ENCODE measurements at regions of chr5 and their contacts with region 1.

Region 1: DNA sequence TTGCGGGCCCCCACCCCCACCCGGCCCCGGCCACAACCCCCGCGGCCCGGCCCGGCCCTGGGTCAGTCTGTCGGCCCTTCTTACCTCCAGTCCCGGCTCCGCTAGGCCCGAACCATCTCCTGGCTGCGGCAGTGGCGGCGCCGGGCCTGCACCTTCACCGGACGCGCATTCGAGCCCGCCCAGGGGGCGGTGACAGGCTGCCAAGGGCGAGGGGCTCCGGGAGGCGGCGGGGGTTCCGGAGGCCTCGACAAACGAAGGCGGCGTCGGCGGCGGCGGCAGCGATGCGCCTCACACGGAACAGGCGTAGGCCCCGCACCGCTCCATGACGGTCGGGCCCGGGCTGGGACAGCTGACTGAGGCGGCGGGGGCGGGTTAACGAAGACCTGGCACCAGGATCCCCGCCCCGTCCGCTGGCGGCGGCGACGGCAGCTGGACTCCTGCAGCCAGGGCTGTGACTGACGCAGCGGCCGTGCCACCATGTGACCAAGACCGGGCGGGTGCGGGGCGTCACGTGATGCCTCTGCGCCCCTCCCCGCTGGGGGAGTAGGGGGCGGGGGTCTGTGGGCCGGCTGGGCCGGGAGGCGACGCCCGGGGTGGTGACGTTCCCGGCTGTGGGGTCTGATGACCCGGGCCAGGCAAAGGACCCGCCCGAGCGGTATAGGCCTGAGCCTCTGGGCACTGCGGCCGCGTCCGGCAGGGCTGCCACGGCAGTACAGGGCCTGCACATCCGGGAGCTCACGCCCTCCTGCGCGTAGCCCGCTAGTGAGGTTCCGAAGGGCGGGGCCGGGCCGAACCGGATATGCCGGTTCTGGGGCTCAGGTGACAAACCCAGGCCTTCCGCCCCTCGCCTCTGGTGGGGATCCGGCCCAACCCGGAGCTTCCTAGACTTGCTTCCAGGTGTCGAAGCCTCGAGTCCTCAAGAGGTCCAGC is at the start of gene AFF4:
- DNase-seq: peak; percentile 81 to 90 (median 85)
- ATAC-seq: peak; percentile 92
- H3K4me3 ChIP-seq: peak within 1 kb of the TSS; percentile 65
- H3K4me3 Mint-ChIP-seq: peak within 1 kb of the TSS; percentile 90 to 100 (median 98)
- H3K27ac ChIP-seq: peak within 1 kb of the TSS; percentile 94
- H3K27ac Mint-ChIP-seq: peak within 1 kb of the TSS; percentile 96 to 100 (median 98)
- H3K4me1 ChIP-seq: peaks cover 10 to 22% of the 10 kb centered on the region in 2 donors
- H3K4me1 Mint-ChIP-seq: peaks cover 26 to 52% (median 38%) of the 10 kb centered on the region in 7 donors
- H3K27me3 ChIP-seq: no peaks in the 10 kb centered on the region
- H3K27me3 Mint-ChIP-seq: no peaks in the 10 kb centered on the region
- total RNA-seq, gene AFF4: 39.7 to 82.3 (median 69.0) TPM

Region 2: GRCh38 chr5:132556763-132557477 is 406.5 kb before region 1 on chr5 and contains the start of gene RAD50:
- CTCF ChIA-PET with region 1: interaction called, 3 read pairs
- POLR2A ChIA-PET with region 1: no interaction called
- intact Hi-C with region 1: loop called (anchors 2 to 5 kb)
- DNase-seq: peak; percentile 81 to 92 (median 90)
- ATAC-seq: peak; percentile 97
- H3K4me3 ChIP-seq: peak within 1 kb of the TSS; percentile 78
- H3K4me3 Mint-ChIP-seq: peak within 1 kb of the TSS; percentile 90 to 99 (median 96)
- H3K27ac ChIP-seq: peak within 1 kb of the TSS; percentile 76
- H3K27ac Mint-ChIP-seq: peak within 1 kb of the TSS; percentile 90 to 98 (median 97)
- H3K4me1 ChIP-seq: peaks cover 5 to 14% of the 10 kb centered on the region in 2 donors
- H3K4me1 Mint-ChIP-seq: peaks cover 10 to 37% (median 29%) of the 10 kb centered on the region in 7 donors
- H3K27me3 ChIP-seq: no peaks in the 10 kb centered on the region
- H3K27me3 Mint-ChIP-seq: no peaks in the 10 kb centered on the region
- total RNA-seq, gene RAD50: 18.0 to 35.4 (median 32.2) TPM

Region 3: GRCh38 chr5:132777209-132778069 is 186.0 kb before region 1 on chr5 and contains the start of gene SEPTIN8:
- CTCF ChIA-PET with region 1: no interaction called
- POLR2A ChIA-PET with region 1: no interaction called
- intact Hi-C with region 1: loop called in 1 of 2 experiments (anchors 5 kb)
- DNase-seq: peak in 7 of 9 donors; percentile 1 to 70 (median 26)
- ATAC-seq: peak; percentile 72
- H3K4me3 ChIP-seq: peak within 1 kb of the TSS; percentile 68
- H3K4me3 Mint-ChIP-seq: peak within 1 kb of the TSS; percentile 71 to 91 (median 84)
- H3K27ac ChIP-seq: no peak within 1 kb of the TSS
- H3K27ac Mint-ChIP-seq: peak within 1 kb of the TSS in 5 of 9 donors; percentile 20 to 85 (median 56)
- H3K4me1 ChIP-seq: peaks cover 7 to 15% of the 10 kb centered on the region in 2 donors
- H3K4me1 Mint-ChIP-seq: peaks cover 0 to 41% (median 26%) of the 10 kb centered on the region in 7 donors
- H3K27me3 ChIP-seq: peaks cover 0 to 8% of the 10 kb centered on the region in 2 donors
- H3K27me3 Mint-ChIP-seq: peaks cover 33 to 63% (median 45%) of the 10 kb centered on the region in 5 donors
- total RNA-seq, gene SEPTIN8: 2.7 to 42.1 (median 5.2) TPM

Region 4: DNA sequence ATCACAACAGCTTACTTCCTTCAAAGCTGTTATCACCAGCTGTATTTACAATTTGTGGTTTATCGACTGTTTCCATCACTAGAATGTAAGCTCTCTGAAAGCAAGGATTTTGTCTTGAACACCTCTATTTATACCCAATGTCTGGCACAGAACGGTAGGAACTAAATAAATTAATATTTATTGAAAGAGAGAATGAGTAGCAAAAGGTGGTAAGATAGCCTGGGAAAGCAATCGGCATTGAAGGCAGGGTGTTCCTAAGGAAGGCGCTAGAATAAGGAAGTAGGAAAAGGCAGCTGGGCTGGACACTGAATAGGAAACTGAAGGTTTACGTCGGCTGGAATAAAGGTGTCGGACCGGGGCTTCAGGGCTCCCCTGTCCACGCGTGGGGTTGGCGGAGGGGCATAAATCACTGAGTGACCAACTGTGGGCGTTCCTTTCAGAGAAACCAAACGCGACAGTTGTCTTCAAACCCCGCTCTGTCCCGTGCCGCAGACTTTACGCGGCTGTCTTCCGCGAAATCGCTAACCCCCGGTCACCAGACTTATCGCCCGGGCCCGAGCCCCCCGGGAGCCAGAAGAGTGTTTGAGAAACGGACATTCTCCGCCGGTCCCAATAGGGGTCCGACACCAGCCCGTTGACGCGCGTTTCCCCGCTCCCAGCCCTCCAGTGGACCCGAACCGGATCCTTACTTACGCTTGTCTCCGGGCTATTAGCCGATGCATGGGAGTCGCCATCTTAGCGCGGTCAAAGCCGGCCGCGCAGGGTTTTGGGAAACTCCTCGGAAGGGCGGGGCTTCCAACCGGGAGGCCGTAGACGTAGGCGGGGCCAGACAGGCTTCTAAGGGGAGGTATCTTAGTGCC is 62.6 kb after region 1 on chr5 and contains the start of gene ZCCHC10:
- CTCF ChIA-PET with region 1: no interaction called
- POLR2A ChIA-PET with region 1: interaction called, 16 read pairs
- intact Hi-C with region 1: loop called (anchors 1 kb)
- DNase-seq: peak; percentile 75 to 90 (median 84)
- ATAC-seq: peak; percentile 100
- H3K4me3 ChIP-seq: peak within 1 kb of the TSS; percentile 99
- H3K4me3 Mint-ChIP-seq: peak within 1 kb of the TSS; percentile 92 to 98 (median 94)
- H3K27ac ChIP-seq: peak within 1 kb of the TSS; percentile 96
- H3K27ac Mint-ChIP-seq: peak within 1 kb of the TSS; percentile 85 to 98 (median 94)
- H3K4me1 ChIP-seq: peaks cover 4% of the 10 kb centered on the region in 2 donors
- H3K4me1 Mint-ChIP-seq: peaks cover 14 to 37% (median 26%) of the 10 kb centered on the region in 7 donors
- H3K27me3 ChIP-seq: no peaks in the 10 kb centered on the region
- H3K27me3 Mint-ChIP-seq: peaks cover 0 to 8% (median 0%) of the 10 kb centered on the region in 5 donors
- total RNA-seq, gene ZCCHC10: 16.0 to 32.9 (median 18.2) TPM

Region 5: GRCh38 chr5:133051580-133052332 is 88.3 kb after region 1 on chr5 and contains the start of gene HSPA4:
- CTCF ChIA-PET with region 1: no interaction called
- POLR2A ChIA-PET with region 1: interaction called, 52 read pairs
- intact Hi-C with region 1: loop called (anchors 1 kb)
- DNase-seq: peak; percentile 86 to 99 (median 98)
- ATAC-seq: peak; percentile 91
- H3K4me3 ChIP-seq: peak within 1 kb of the TSS; percentile 92
- H3K4me3 Mint-ChIP-seq: peak within 1 kb of the TSS; percentile 91 to 99 (median 98)
- H3K27ac ChIP-seq: peak within 1 kb of the TSS; percentile 98
- H3K27ac Mint-ChIP-seq: peak within 1 kb of the TSS; percentile 99 to 100 (median 100)
- H3K4me1 ChIP-seq: peaks cover 17 to 19% of the 10 kb centered on the region in 2 donors
- H3K4me1 Mint-ChIP-seq: peaks cover 31 to 70% (median 52%) of the 10 kb centered on the region in 7 donors
- H3K27me3 ChIP-seq: no peaks in the 10 kb centered on the region
- H3K27me3 Mint-ChIP-seq: no peaks in the 10 kb centered on the region
- total RNA-seq, gene HSPA4: 42.1 to 103 (median 50.0) TPM

Measured in naive thymus-derived CD4-positive, alpha-beta T cell (primary cell).